K562 (cell line): ENCODE measurements at regions of chr14 and their contacts with region 1.

Region 1: DNA sequence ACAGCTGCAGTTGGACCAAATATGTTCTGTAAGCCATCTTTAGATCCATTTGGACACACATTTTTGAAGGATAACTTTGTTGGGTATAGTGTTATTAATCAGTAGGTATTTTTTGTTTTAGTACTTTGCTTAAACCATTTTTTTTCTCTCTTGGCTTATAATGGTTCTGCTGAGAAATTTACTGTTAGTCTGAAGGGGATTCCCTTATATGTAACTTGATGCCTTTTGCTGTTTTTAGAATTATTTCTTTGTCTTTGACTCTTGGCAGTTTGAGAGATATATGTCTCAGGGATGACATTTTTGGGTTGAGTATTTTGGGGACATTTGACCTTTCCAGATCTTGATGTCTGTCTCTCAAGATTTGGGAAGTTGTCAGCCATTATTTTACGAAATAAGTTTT is 169.8 kb downstream of the GPHN start:
- DNase-seq: no peak
- ATAC-seq: no peak
- H3K4me3 ChIP-seq: no peak overlapping the region
- H3K27ac ChIP-seq: no peak overlapping the region
- H3K4me1 ChIP-seq: no peaks in the 10 kb centered on the region
- H3K27me3 ChIP-seq: no peaks in the 10 kb centered on the region
- CTCF ChIP-seq: no peak
- EP300 ChIP-seq: no peak
- POLR2A ChIP-seq: no peak
- RAD21 ChIP-seq: no peak

Region 2: GRCh38 chr14:66568220-66568619 is 109.6 kb before region 1 on chr14:
- CTCF ChIA-PET with region 1: no interaction called
- POLR2A ChIA-PET with region 1: no interaction called
- in situ Hi-C with region 1: loop called (anchors 5 kb)
- intact Hi-C with region 1: no loop called
- DNase-seq: no peak
- ATAC-seq: no peak
- H3K4me3 ChIP-seq: no peak overlapping the region
- H3K27ac ChIP-seq: no peak overlapping the region
- H3K4me1 ChIP-seq: no peaks in the 10 kb centered on the region
- H3K27me3 ChIP-seq: no peaks in the 10 kb centered on the region
- CTCF ChIP-seq: no peak
- EP300 ChIP-seq: no peak
- POLR2A ChIP-seq: no peak
- RAD21 ChIP-seq: no peak

Region 3: DNA sequence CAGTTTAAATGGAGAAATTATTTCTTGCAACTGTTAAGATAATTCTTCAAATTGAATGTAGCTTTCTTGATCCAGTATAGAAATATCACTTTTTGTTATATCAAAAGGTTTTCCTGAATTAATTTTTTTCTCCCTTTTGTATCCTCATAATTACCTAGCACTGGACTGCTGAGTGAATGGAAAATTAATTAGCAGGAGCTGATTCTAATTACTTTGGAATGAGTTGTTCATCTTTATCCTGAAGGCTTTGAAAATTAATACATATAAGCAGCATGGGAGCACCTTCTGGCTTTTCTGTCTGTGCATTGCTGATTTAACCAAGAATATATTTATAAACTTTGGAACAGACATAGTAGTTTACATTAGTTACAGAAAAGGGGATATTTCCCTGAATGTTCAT is 203.8 kb after region 1 on chr14:
- CTCF ChIA-PET with region 1: no interaction called
- POLR2A ChIA-PET with region 1: no interaction called
- in situ Hi-C with region 1: no loop called
- intact Hi-C with region 1: no loop called
- DNase-seq: no peak
- ATAC-seq: no peak
- H3K4me3 ChIP-seq: no peak overlapping the region
- H3K27ac ChIP-seq: no peak overlapping the region
- H3K4me1 ChIP-seq: no peaks in the 10 kb centered on the region
- H3K27me3 ChIP-seq: no peaks in the 10 kb centered on the region
- CTCF ChIP-seq: no peak
- EP300 ChIP-seq: no peak
- POLR2A ChIP-seq: no peak
- RAD21 ChIP-seq: no peak